Activated CD4-positive, alpha-beta memory T cell treated with anti-CD3 and anti-CD28 coated beads for 36 hours (primary cell): ENCODE measurements at regions of chr14 and their contacts with region 1.

Region 1: DNA sequence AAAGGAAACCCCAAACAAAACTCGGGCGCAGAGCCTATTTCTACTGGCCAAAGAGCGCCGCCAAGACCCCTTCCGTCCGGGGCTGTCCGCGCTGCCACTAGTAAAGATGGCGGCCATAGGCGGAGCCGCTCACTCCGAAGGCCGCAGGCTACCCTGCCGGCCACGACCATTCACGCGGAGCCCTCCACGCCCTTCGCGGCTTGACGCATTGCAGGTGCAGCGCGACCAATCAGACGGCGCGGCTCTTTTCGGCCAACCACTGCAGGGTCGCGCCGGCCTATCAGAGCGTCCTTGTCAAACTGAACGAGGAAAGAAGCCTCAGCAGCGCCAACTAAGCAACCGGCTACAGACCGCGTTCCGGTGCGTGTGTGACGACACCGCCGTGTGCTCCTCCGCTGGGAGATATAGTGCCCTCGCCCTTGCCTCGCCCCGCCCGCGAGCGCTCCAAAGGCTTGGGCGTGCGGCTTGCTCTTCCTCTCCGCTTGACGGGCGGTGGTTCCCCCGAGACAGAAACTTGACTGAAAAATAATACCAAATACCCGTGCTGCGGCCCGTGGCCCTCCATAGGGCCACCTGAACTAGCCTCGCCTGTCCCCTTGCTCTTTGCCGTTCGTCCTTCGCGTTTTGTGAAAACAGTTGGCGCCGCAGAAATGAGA is 13.6 kb upstream of the CALM1 start:
- DNase-seq: peak; percentile 99
- H3K4me3 Mint-ChIP-seq: no peak overlapping the region
- H3K27ac Mint-ChIP-seq: no peak overlapping the region
- H3K4me1 Mint-ChIP-seq: peaks cover 22% of the 10 kb centered on the region
- H3K27me3 Mint-ChIP-seq: no peaks in the 10 kb centered on the region

Region 2: GRCh38 chr14:90256354-90257131 is 126.7 kb before region 1 on chr14 and contains the start of gene PSMC1:
- CTCF ChIA-PET with region 1: no interaction called
- POLR2A ChIA-PET with region 1: interaction called, 9 read pairs
- intact Hi-C with region 1: loop called (anchors 5 kb)
- DNase-seq: peak; percentile 95
- H3K4me3 Mint-ChIP-seq: peak within 1 kb of the TSS; percentile 98
- H3K27ac Mint-ChIP-seq: peak within 1 kb of the TSS; percentile 94
- H3K4me1 Mint-ChIP-seq: peaks cover 26% of the 10 kb centered on the region
- H3K27me3 Mint-ChIP-seq: peaks cover 5% of the 10 kb centered on the region
- total RNA-seq, gene PSMC1: 107 to 108 TPM

Region 3: DNA sequence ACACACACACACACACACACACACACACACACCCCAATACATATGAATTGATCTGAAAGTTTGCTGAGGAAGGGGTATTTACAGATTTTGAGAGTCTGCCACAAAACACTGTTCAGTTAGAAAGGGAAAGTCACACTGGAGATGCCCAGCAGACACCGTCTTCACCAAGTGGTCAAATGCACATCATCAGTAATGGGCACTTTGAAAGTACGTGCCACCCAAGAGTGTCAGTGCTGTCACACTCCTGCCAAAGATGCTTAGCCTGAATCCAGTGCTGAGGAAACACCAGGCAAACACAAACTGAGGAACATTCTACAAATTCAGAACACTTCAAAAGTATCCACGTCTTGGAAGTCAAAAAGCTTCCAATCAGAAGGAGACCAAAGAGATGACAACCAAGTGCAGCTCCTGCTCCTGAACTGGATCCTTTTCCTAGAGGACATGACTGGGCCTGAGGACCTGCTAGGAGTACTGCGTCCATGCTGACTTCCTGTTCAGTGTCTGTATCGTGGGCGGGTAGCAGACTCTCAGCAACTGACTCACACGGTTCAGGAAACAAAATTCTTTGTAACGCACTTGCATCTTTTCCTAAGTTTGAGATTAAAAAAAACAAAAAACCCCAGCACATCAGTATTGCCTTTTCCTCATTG is 108.3 kb before region 1 on chr14:
- CTCF ChIA-PET with region 1: no interaction called
- POLR2A ChIA-PET with region 1: interaction called, 10 read pairs
- intact Hi-C with region 1: no loop called
- DNase-seq: peak; percentile 65
- H3K4me3 Mint-ChIP-seq: peak overlapping the region; percentile 18
- H3K27ac Mint-ChIP-seq: peak overlapping the region; percentile 95
- H3K4me1 Mint-ChIP-seq: peaks cover 22% of the 10 kb centered on the region
- H3K27me3 Mint-ChIP-seq: no peaks in the 10 kb centered on the region

Region 4: DNA sequence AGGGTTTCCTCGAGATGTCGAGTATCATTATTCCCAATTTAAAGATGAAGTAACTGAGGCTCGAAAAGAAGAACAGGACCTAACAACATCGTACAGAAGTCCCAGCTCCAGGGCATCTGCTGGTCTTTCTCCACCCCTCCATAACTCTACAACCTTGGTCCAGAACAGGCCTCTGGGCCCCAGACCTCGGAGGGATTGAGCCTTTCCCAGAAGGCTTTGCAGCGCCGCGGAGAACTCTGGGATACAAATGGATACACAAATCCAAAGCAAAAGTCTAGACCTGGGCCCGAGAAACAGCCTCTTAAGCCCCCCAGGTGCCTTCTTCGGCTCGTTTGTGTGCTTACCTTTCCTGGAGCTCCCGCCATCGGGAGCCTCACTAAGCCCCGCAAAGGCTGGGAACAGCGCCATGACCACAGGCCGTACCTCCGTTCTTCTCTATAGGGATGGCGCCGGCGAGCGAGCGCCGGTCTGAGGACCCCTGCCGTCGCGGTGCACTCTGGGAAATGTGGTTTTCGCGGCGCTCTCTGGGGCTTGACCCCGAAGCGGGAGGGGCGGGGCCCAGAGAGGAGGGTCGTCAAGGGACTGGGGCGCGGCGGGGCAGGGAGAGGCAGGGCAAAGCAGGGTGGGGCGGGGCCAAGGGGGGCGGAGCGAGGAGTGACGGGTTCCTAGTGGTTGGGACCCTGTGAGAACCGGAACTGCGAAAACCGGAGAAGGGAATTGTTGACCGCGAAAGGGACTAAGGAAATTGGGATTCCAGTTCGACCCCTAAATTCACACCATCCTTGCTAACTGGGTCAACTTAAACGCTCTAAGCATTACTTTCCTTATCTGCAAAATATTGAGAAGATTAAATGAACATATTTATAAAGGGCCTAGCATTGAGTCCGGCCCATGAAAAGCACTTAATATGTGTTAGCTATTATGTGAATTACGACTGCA is 51.4 kb before region 1 on chr14 and contains the start of gene NRDE2:
- CTCF ChIA-PET with region 1: no interaction called
- POLR2A ChIA-PET with region 1: interaction called, 5 read pairs
- intact Hi-C with region 1: loop called (anchors 1 kb)
- DNase-seq: peak; percentile 99
- H3K4me3 Mint-ChIP-seq: peak within 1 kb of the TSS; percentile 88
- H3K27ac Mint-ChIP-seq: peak within 1 kb of the TSS; percentile 91
- H3K4me1 Mint-ChIP-seq: peaks cover 26% of the 10 kb centered on the region
- H3K27me3 Mint-ChIP-seq: peaks cover 3% of the 10 kb centered on the region
- total RNA-seq, gene NRDE2: 18.9 to 24.8 TPM

Region 5: DNA sequence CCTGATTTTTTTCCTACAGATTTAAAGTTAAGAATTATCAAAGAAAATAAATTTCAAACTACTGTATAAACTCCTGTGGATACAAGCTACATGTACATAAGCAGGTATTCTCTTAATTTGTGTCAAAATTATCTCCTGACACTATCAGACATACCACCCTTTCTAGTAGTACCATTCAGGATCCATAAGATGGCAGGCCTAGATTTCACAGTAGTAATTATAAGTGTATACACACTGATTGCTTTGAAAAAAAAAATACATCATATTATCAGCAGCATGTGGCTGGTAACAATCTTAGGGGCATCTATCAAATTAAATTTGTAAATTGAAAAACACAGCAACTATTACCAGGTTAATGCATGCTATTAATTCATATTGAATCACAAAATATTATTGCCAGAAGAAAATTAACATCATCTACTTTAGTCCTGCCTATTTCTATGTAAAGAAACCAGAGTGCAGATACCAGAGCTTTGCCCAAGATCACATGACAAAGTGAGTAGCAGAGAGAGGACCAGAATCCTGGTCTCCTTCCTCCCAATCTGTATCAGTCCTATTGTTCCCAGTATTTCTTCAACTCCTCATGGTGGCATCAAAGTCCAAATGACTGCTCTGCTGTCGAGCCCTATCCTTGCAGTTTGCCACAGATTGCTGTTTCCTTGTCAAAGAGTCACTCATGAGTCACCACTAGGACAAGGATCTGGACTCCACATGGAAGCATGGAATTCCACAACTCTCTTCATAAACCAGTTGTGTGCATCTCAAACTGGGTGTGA is 14.1 kb before region 1 on chr14:
- CTCF ChIA-PET with region 1: interaction called, 10 read pairs
- POLR2A ChIA-PET with region 1: interaction called, 3 read pairs
- intact Hi-C with region 1: no loop called
- DNase-seq: no peak
- H3K4me3 Mint-ChIP-seq: no peak overlapping the region
- H3K27ac Mint-ChIP-seq: no peak overlapping the region
- H3K4me1 Mint-ChIP-seq: no peaks in the 10 kb centered on the region
- H3K27me3 Mint-ChIP-seq: no peaks in the 10 kb centered on the region

Region 6: DNA sequence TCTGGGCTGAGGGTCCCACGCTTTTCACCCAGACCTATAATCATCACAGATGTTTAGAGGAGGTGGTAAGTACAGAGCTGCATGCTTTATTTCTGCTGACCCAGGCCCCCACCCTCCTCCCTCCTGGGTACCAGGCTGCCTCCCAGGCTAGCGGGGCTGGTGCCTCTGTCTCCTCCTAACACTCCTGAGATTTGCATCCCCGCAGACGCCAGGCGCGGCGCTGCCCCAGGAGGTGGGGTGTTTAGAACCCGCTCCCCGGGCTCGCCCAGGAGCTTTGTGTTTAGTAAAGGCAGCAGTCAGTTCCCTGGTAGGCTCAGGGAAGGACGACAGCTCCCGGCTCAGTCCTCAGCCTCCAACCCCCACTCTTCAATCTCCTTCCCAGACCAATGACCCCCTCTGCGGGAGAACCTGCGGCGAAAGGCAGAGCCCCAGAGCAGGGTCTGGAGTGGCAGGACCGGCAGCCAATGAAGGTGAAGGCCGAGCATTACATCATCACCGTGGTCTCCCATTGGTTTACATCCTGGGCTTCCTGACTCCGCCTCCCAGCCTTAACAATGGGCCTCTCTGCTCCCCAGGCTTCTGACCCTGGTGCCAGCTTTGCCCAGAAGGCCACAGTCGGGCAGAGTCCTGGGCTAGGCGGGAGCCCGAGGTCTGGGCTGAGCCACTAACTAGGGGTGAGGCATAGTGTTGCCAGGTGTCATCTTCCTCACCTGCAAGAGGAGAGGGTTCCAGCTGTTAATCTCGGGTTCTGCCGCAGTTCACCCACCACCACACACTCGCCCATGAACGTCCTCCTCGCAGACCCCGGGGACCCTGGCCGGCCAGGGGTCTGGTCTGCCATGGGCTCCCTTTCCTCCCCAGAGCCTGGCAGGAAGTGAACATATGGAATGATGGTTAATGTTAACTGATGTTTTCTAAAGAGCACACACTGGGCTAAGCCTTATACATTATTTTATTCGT is 71.1 kb after region 1 on chr14:
- CTCF ChIA-PET with region 1: no interaction called
- POLR2A ChIA-PET with region 1: no interaction called
- intact Hi-C with region 1: no loop called
- DNase-seq: no peak
- H3K4me3 Mint-ChIP-seq: no peak overlapping the region
- H3K27ac Mint-ChIP-seq: no peak overlapping the region
- H3K4me1 Mint-ChIP-seq: peaks cover 3% of the 10 kb centered on the region
- H3K27me3 Mint-ChIP-seq: no peaks in the 10 kb centered on the region

Region 7: GRCh38 chr14:91249841-91250616 is 866.8 kb after region 1 on chr14:
- CTCF ChIA-PET with region 1: no interaction called
- POLR2A ChIA-PET with region 1: interaction called, 3 read pairs
- intact Hi-C with region 1: loop called (anchors 5 kb)
- DNase-seq: peak; percentile 67
- H3K4me3 Mint-ChIP-seq: peak overlapping the region; percentile 36
- H3K27ac Mint-ChIP-seq: peak overlapping the region; percentile 92
- H3K4me1 Mint-ChIP-seq: peaks cover 85% of the 10 kb centered on the region
- H3K27me3 Mint-ChIP-seq: no peaks in the 10 kb centered on the region

Region 8: DNA sequence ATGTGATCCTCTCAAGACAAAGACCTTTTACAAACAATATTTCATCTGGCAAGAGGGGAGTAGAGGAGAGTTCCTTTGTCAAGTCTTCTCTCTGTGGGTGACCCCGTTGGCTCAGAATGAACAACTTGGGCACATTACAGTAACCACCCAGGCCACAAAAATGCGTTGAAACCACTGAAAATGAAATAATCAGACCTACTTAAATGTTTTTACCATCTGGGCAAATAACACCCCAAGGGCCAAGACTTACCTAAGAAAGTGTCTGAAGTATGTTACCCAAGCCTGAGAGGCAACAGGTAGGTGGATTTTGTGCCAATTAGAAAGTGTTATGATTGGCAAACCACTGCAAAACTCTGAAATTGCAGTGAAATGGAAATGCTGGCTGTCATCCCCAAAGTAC is 1482.9 kb after region 1 on chr14:
- CTCF ChIA-PET with region 1: no interaction called
- POLR2A ChIA-PET with region 1: no interaction called
- intact Hi-C with region 1: loop called (anchors 10 kb)
- DNase-seq: peak; percentile 73
- H3K4me3 Mint-ChIP-seq: peak overlapping the region; percentile 87
- H3K27ac Mint-ChIP-seq: peak overlapping the region; percentile 94
- H3K4me1 Mint-ChIP-seq: peaks cover 92% of the 10 kb centered on the region
- H3K27me3 Mint-ChIP-seq: no peaks in the 10 kb centered on the region